K562 (cell line): ENCODE measurements at regions of chr5 and their contacts with region 1.

Region 1: GRCh38 chr5:28766565-28767158 is 1728.3 kb upstream of the CDH9 start:
- DNase-seq: peak in 3 of 4 experiments; percentile 6 to 52 (median 15)
- ATAC-seq: no peak
- H3K4me3 ChIP-seq: no peak overlapping the region
- H3K27ac ChIP-seq: no peak overlapping the region
- H3K4me1 ChIP-seq: no peaks in the 10 kb centered on the region
- H3K27me3 ChIP-seq: no peaks in the 10 kb centered on the region
- CTCF ChIP-seq: peak in 2 of 3 experiments; percentile 18 to 50; a peak in 3 of 6 replicates
- EP300 ChIP-seq: no peak
- POLR2A ChIP-seq: no peak
- RAD21 ChIP-seq: peak; percentile 65 to 79

Region 2: DNA sequence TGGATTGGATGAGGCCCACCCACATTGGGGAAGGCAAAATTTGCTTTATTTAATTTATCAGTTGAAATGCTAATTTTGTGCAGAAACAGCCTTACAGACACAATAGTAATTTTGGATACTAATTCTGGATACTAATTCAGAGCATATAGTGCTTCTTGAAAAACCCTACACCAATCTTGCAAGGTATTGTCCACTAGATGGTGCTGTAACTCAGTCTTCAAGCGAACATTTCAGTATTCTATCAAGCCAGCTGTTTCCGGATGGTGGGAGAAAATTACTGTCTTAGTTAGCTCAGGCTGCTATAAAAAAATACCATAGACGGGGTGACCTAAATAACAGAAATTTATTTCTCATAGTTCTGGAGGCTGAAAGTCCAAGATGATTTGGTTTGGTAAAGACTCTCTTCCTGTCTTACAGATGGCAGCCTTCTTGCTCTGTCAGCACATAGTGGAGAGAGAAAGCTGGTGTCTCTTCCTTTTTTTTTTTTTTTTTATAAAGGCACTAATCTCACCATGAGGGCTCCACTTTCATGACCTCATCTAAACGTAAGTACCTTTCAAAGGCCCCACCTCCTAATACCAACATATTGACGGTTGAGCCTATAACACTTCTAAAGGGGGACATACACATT is 421.7 kb before region 1 on chr5:
- CTCF ChIA-PET with region 1: no interaction called
- POLR2A ChIA-PET with region 1: no interaction called
- in situ Hi-C with region 1: loop called (anchors 25 kb)
- intact Hi-C with region 1: loop called (anchors 5 kb)
- DNase-seq: peak; percentile 8 to 49 (median 18)
- ATAC-seq: 0 out of 3 replicates have a peak, but pooled peaks have one; percentile 37
- H3K4me3 ChIP-seq: no peak overlapping the region
- H3K27ac ChIP-seq: no peak overlapping the region
- H3K4me1 ChIP-seq: no peaks in the 10 kb centered on the region
- H3K27me3 ChIP-seq: no peaks in the 10 kb centered on the region
- CTCF ChIP-seq: peak in 2 of 3 experiments; percentile 30 to 49; a peak in 3 of 6 replicates
- EP300 ChIP-seq: no peak
- POLR2A ChIP-seq: no peak
- RAD21 ChIP-seq: peak; percentile 68 to 82

Region 3: GRCh38 chr5:28850320-28850921 is 83.8 kb after region 1 on chr5:
- CTCF ChIA-PET with region 1: no interaction called
- POLR2A ChIA-PET with region 1: no interaction called
- in situ Hi-C with region 1: no loop called
- intact Hi-C with region 1: no loop called
- DNase-seq: peak in 1 of 4 experiments; percentile 14
- ATAC-seq: no peak; the same call in 2 of the 3 replicates
- H3K4me3 ChIP-seq: no peak overlapping the region
- H3K27ac ChIP-seq: no peak overlapping the region
- H3K4me1 ChIP-seq: no peaks in the 10 kb centered on the region
- H3K27me3 ChIP-seq: no peaks in the 10 kb centered on the region
- CTCF ChIP-seq: no peak
- EP300 ChIP-seq: no peak
- POLR2A ChIP-seq: no peak
- RAD21 ChIP-seq: no peak